AG04449 (cell line): ENCODE measurements at regions of chr7 and their contacts with region 1.

Region 1: GRCh38 chr7:14717816-14718215 is 184.7 kb downstream of the DGKB start:
- DNase-seq: peak; percentile 2
- H3K4me3 ChIP-seq: no peak overlapping the region
- CTCF ChIP-seq: peak; percentile 18

Region 2: DNA sequence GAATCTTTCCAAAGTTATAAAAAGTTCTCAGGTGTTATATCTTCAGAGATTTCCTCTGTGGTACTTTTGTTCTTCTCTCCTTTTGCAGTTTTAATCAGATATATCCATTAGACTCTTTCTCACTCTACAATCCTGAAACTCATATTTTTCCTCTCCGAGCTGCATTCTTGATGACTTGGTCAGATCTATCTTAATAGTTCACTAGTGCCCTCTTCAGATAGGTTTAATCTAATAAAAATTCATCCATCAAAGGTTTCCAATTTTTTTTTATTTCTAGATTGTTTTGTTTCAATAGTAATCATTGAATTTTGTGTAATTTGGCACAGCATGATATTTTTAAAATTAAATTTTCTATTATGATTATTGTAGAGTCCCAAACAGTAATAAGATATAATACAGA is 206.6 kb after region 1 on chr7:
- CTCF ChIA-PET with region 1: interaction called, 71 read pairs
- POLR2A ChIA-PET with region 1: no interaction called
- DNase-seq: no peak
- H3K4me3 ChIP-seq: no peak overlapping the region
- CTCF ChIP-seq: no peak

Region 3: DNA sequence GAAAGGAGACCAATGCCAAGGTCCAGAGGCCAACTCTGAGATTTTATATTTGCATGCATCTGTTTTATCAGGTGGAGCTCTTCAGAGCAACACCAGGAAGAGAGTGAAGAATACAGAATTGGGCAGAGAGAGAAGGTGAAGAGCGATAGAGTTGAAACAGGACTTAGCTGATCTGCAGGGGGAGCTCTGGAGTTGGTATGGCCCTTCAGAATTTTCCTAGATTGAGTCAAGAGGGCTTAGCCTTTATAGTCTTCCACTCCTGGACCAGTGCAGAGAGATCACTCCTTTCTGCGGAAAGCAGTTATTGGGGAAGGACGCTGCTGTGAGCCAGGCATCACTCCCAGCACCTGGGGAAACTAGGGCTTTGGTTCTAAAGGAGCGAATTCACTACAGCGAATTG is 289.7 kb after region 1 on chr7:
- CTCF ChIA-PET with region 1: interaction called, 106 read pairs
- POLR2A ChIA-PET with region 1: no interaction called
- DNase-seq: no peak
- H3K4me3 ChIP-seq: no peak overlapping the region
- CTCF ChIP-seq: peak; percentile 21

Region 4: GRCh38 chr7:15015545-15016326 is 297.9 kb after region 1 on chr7:
- CTCF ChIA-PET with region 1: interaction called, 106 read pairs
- POLR2A ChIA-PET with region 1: no interaction called
- DNase-seq: no peak
- H3K4me3 ChIP-seq: peak overlapping the region; percentile 21
- CTCF ChIP-seq: peak; percentile 42